Activated CD4-positive, alpha-beta memory T cell treated with anti-CD3 and anti-CD28 coated beads for 36 hours (primary cell): ENCODE measurements at regions of chr2 and their contacts with region 1.

Region 1: DNA sequence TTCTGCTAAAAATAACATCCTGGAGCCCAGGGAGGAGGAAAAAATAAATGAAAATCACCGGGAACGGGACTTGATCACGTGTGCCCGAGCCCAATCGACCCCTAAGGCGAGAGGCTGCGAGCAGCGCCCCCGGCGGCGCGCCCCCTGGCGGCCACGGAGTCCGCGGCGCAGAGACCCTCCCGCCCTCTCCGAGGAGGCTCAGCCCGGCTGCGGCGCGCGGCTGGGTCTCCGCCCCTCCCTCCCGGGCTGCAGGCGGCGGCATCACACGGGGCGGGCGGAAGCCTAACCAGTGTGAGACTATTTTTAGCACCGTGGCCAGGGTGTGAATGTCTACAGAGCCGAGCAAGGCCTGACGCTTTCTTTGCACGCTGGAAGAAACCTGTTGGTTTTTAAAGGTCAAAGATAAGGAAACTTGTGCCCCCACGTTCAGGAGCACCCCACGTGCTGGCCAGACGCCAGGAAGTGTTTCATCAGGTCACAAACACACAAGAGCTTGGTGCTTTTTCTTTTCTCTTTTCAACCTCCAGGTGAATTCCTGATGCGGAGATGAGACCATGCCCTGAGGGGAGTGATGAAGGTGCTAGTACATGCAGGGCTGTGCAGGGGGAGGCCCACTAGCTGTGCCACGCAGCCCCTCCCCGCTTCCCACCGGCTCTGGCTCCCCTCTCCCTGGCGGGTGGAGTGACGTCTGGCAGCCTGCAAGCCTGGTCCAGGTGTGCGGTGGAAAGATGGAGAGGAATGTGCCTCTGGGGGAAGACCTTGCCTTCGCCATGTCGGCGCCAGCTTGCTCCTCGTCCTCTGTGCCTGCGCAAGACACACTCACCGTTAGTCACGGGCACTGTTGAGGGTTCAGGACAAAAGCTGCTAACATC is 35.3 kb upstream of the DNMT3A start:
- DNase-seq: peak; percentile 96
- H3K4me3 Mint-ChIP-seq: peak overlapping the region; percentile 50
- H3K27ac Mint-ChIP-seq: peak overlapping the region; percentile 96
- H3K4me1 Mint-ChIP-seq: peaks cover 27% of the 10 kb centered on the region
- H3K27me3 Mint-ChIP-seq: no peaks in the 10 kb centered on the region

Region 2: GRCh38 chr2:24461685-24462084 is 915.3 kb before region 1 on chr2:
- CTCF ChIA-PET with region 1: no interaction called
- POLR2A ChIA-PET with region 1: no interaction called
- intact Hi-C with region 1: no loop called
- DNase-seq: no peak
- H3K4me3 Mint-ChIP-seq: no peak overlapping the region
- H3K27ac Mint-ChIP-seq: no peak overlapping the region
- H3K4me1 Mint-ChIP-seq: peaks cover 7% of the 10 kb centered on the region
- H3K27me3 Mint-ChIP-seq: no peaks in the 10 kb centered on the region

Region 3: DNA sequence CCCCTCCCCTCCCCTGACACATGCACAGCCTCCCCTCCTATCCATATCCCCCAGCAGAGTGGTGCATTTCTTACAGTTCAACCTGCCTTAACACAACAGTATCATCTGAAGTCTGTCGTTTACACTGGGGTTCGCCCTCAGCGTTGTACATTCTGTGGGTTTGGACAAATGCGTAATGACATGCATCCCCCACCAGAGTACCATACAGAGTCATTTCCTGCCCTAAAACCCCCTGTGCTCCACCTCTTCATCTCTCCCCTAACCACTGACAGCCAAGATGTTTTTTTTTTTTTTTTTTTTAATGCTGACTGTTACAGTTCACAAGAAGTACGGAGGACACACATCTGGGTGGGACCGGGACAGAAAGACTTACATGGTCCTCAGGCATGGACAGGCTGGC is 231.2 kb before region 1 on chr2:
- CTCF ChIA-PET with region 1: no interaction called
- POLR2A ChIA-PET with region 1: no interaction called
- intact Hi-C with region 1: no loop called
- DNase-seq: no peak
- H3K4me3 Mint-ChIP-seq: no peak overlapping the region
- H3K27ac Mint-ChIP-seq: no peak overlapping the region
- H3K4me1 Mint-ChIP-seq: no peaks in the 10 kb centered on the region
- H3K27me3 Mint-ChIP-seq: no peaks in the 10 kb centered on the region

Region 4: GRCh38 chr2:25252281-25253105 is 124.5 kb before region 1 on chr2:
- CTCF ChIA-PET with region 1: no interaction called
- POLR2A ChIA-PET with region 1: no interaction called
- intact Hi-C with region 1: no loop called
- DNase-seq: peak; percentile 67
- H3K4me3 Mint-ChIP-seq: peak overlapping the region; percentile 52
- H3K27ac Mint-ChIP-seq: peak overlapping the region; percentile 36
- H3K4me1 Mint-ChIP-seq: peaks cover 23% of the 10 kb centered on the region
- H3K27me3 Mint-ChIP-seq: no peaks in the 10 kb centered on the region

Region 5: GRCh38 chr2:25276569-25277465 is 100.2 kb before region 1 on chr2:
- CTCF ChIA-PET with region 1: interaction called, 7 read pairs
- POLR2A ChIA-PET with region 1: interaction called, 3 read pairs
- intact Hi-C with region 1: loop called (anchors 2 kb)
- DNase-seq: peak; percentile 88
- H3K4me3 Mint-ChIP-seq: peak overlapping the region; percentile 65
- H3K27ac Mint-ChIP-seq: peak overlapping the region; percentile 90
- H3K4me1 Mint-ChIP-seq: peaks cover 66% of the 10 kb centered on the region
- H3K27me3 Mint-ChIP-seq: no peaks in the 10 kb centered on the region

Region 6: GRCh38 chr2:25309402-25309801 is 67.6 kb before region 1 on chr2:
- CTCF ChIA-PET with region 1: interaction called, 12 read pairs
- POLR2A ChIA-PET with region 1: no interaction called
- intact Hi-C with region 1: loop called (anchors 1 kb)
- DNase-seq: peak; percentile 75
- H3K4me3 Mint-ChIP-seq: no peak overlapping the region
- H3K27ac Mint-ChIP-seq: no peak overlapping the region
- H3K4me1 Mint-ChIP-seq: peaks cover 87% of the 10 kb centered on the region
- H3K27me3 Mint-ChIP-seq: no peaks in the 10 kb centered on the region

Region 7: DNA sequence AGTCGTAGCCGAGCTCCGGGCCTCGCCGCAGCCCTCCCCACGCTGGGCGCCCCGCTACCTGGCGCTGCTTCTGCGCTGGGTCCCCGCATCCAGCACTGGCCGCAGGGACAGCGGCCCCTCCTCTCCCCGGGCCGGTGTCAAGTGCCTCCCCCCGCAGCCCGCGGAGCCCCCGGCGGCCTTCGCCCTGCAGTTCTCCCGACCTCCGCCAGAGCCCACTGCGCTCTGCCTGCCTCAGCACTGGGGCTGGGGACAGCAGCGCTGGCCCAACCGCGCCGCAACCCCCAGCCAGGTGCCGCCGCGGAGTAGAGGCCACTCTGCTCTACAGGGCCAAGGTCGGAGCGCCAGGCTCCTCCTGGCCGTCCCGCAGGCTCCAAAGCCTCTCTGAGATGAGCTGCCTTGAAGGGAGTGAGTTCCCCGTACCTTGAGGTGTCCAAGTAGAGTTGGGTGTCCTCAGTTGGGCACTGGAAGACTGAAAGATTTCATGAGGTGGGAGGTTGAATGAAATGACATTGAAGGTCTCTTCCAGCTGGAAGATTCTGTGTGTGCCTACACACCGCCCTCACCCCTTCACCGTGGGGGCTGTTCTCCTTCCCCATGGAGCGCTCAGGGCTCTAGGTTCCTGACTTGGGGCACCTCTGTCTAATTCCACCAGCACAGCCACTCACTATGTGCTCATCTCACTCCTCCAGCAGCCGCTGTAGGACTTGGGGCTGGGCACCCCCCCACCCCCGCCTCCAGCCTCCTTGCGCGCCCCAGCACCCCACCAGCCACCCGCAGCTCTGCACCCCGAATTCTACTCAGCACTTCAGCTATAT is 34.4 kb before region 1 on chr2:
- CTCF ChIA-PET with region 1: interaction called, 26 read pairs
- POLR2A ChIA-PET with region 1: interaction called, 3 read pairs
- intact Hi-C with region 1: loop called (anchors 5 kb)
- DNase-seq: peak; percentile 89
- H3K4me3 Mint-ChIP-seq: peak overlapping the region; percentile 70
- H3K27ac Mint-ChIP-seq: peak overlapping the region; percentile 77
- H3K4me1 Mint-ChIP-seq: peaks cover 38% of the 10 kb centered on the region
- H3K27me3 Mint-ChIP-seq: no peaks in the 10 kb centered on the region

Region 8: DNA sequence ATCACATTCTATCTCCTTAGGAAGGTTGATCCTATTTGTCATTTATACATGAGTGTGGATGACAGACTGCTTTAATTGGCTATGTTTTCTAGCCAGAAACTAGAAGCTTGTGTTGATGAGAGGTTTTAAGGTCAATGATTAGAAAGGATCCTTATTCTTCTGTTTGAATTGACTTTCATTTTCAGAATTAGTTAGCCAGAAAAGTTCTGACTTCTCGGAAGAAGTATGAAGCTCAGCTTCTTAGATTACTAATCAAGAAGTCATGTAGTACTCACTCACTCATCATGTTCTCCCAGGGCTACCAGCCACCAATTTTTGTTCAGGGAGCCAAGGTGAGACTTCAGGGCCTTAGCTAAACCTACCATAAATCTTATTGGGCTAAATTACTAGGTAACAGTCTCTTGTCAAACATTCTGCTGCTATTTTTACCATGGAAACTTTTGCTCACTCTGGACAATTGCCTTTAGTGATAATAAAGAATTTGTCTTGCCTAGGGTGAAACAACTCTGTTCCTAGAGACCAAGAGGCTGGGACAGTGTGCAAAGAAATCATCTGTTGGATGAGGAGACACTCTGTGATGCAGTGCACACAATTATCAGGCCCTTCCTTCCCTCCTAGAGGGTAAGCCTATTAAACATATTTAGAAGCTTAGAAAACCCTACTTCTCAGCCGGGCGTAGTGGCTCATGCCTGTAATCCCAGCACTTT is 76.4 kb after region 1 on chr2:
- CTCF ChIA-PET with region 1: interaction called, 4 read pairs
- POLR2A ChIA-PET with region 1: no interaction called
- intact Hi-C with region 1: loop called (anchors 1 kb)
- DNase-seq: peak; percentile 70
- H3K4me3 Mint-ChIP-seq: peak overlapping the region; percentile 5
- H3K27ac Mint-ChIP-seq: peak overlapping the region; percentile 93
- H3K4me1 Mint-ChIP-seq: peaks cover 26% of the 10 kb centered on the region
- H3K27me3 Mint-ChIP-seq: no peaks in the 10 kb centered on the region

Region 9: DNA sequence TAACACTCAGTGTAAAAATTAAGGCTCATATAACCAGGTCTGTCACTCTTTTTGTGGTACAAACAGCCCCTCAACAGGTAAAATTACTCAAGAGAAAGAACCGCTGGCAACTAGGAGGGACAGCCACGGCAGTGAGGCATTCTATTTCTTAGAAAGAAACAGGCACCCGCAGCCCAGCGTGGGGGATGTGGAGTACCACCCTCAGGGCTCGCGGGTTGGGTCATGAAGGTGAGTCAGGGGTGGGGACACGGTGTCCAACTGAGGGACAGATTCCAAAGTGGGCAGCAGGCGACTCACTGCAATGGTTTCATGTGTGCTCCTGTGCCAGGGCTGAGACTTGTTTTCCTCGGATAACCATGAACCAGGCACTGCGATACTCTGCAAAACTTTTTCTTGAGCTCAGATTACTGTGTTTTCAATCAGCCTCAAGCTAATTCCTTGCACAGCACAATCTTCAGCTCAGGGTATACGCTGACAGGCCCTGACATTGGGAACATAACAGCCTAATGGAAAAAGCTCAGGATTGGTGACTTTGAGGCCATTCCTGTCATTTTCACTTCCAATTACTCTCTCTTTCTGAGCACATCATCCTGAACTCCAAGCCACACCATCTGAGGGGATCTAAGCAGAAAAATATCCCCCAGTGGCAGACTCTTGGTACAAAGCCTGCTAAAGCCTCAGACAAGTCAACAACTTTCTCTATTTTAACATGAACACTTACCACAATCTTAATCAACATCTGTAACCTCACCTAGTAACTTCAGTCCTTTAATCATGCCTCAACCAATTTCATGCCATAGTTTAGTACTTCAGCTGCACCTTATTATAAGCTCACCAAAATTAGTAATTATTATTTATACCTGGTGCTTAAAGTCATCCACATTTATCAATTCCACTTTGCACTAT is 167.2 kb after region 1 on chr2:
- CTCF ChIA-PET with region 1: no interaction called
- POLR2A ChIA-PET with region 1: no interaction called
- intact Hi-C with region 1: no loop called
- DNase-seq: no peak
- H3K4me3 Mint-ChIP-seq: no peak overlapping the region
- H3K27ac Mint-ChIP-seq: no peak overlapping the region
- H3K4me1 Mint-ChIP-seq: no peaks in the 10 kb centered on the region
- H3K27me3 Mint-ChIP-seq: no peaks in the 10 kb centered on the region